Lower leg skin (tissue), 4 donors: ENCODE measurements at regions of chr5 and their contacts with region 1.

Region 1: DNA sequence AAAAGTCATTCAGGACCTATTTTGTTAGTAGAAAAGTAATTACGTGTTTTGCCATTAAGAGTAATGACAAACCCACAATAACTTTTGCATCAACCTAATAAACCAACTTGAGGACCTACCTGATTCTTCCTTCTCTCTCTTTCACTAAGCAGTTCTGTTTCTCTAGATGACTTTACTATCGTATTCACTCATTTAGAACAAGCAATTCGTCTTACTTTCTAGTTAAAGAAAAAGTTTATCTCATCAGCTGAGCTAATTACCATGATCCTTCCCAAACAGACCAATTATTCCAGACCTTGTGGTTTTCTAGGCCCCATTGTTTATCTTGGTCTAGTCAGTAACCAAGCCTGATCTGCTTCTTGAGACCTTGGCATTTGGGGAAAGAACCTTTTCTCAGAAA is 49.6 kb upstream of the PRDM9 start:
- DNase-seq: no peak
- H3K4me3 ChIP-seq: no peak overlapping the region
- CTCF ChIP-seq: no peak
- POLR2A ChIP-seq: no peak

Region 2: GRCh38 chr5:23494538-23494937 is 36.8 kb after region 1 on chr5:
- intact Hi-C with region 1: loop called (anchors 5 kb)
- DNase-seq: no peak
- H3K4me3 ChIP-seq: no peak overlapping the region
- CTCF ChIP-seq: no peak
- POLR2A ChIP-seq: no peak